Activated CD4-positive, alpha-beta memory T cell treated with anti-CD3 and anti-CD28 coated beads for 36 hours (primary cell): ENCODE measurements at regions of chr11 and their contacts with region 1.

Region 1: DNA sequence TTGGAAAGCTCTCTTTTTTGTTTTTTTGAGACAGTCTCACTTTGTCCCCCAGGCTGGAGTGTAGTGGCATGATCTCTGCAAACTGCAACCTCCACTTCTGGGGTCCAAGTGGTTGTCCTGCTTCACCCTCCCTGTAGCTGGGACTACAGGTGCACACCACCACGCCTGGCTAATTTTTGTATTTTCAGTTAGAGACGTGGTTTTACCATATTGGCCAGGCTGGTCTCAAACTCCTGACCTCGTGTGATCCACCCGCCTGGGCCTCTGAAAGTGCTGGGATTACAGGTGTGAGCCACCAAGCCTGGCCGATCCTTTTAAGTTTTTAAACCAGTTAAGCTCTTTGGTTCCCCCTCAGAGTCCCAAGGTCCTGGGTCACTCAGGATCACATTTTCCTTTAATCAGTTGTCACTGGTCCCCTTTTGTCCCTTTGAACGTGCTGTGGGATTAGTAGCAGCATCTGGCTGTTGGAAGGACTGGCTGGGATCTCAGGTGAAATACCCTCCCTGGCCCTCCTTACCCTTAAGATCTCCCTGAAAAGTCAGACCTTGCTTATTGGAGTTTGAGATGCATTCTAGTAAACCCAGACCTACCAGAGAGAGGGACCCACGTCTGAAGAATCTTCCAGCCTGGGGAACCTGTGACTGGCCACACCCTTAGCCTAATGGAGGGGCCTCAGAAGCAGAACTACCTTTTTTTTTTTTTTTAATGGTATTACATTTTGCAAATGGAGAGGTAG is 8.1 kb downstream of the MALAT1 start:
- DNase-seq: peak; percentile 69
- H3K4me3 Mint-ChIP-seq: no peak overlapping the region
- H3K27ac Mint-ChIP-seq: no peak overlapping the region
- H3K4me1 Mint-ChIP-seq: peaks cover 44% of the 10 kb centered on the region
- H3K27me3 Mint-ChIP-seq: peaks cover 4% of the 10 kb centered on the region

Region 2: GRCh38 chr11:65225279-65226102 is 281.4 kb before region 1 on chr11:
- CTCF ChIA-PET with region 1: no interaction called
- POLR2A ChIA-PET with region 1: no interaction called
- intact Hi-C with region 1: loop called (anchors 1 kb)
- DNase-seq: peak; percentile 76
- H3K4me3 Mint-ChIP-seq: peak overlapping the region; percentile 72
- H3K27ac Mint-ChIP-seq: no peak overlapping the region
- H3K4me1 Mint-ChIP-seq: peaks cover 7% of the 10 kb centered on the region
- H3K27me3 Mint-ChIP-seq: peaks cover 24% of the 10 kb centered on the region

Region 3: GRCh38 chr11:65382033-65382807 is 124.7 kb before region 1 on chr11 and contains the start of gene SLC25A45:
- CTCF ChIA-PET with region 1: interaction called, 8 read pairs
- POLR2A ChIA-PET with region 1: interaction called, 39 read pairs
- intact Hi-C with region 1: loop called (anchors 1 kb)
- DNase-seq: peak; percentile 97
- H3K4me3 Mint-ChIP-seq: peak within 1 kb of the TSS; percentile 85
- H3K27ac Mint-ChIP-seq: peak within 1 kb of the TSS; percentile 97
- H3K4me1 Mint-ChIP-seq: peaks cover 41% of the 10 kb centered on the region
- H3K27me3 Mint-ChIP-seq: no peaks in the 10 kb centered on the region
- total RNA-seq, gene SLC25A45: 14.4 to 16.1 TPM

Region 4: GRCh38 chr11:65432686-65433582 is 74.0 kb before region 1 on chr11:
- CTCF ChIA-PET with region 1: interaction called, 5 read pairs
- POLR2A ChIA-PET with region 1: interaction called, 4,089 read pairs
- intact Hi-C with region 1: no loop called
- DNase-seq: peak; percentile 5
- H3K4me3 Mint-ChIP-seq: peak overlapping the region; percentile 21
- H3K27ac Mint-ChIP-seq: peak overlapping the region; percentile 78
- H3K4me1 Mint-ChIP-seq: peaks cover 88% of the 10 kb centered on the region
- H3K27me3 Mint-ChIP-seq: no peaks in the 10 kb centered on the region

Region 5: GRCh38 chr11:65477149-65477965 is 29.6 kb before region 1 on chr11:
- CTCF ChIA-PET with region 1: interaction called, 8 read pairs
- POLR2A ChIA-PET with region 1: interaction called, 824 read pairs
- intact Hi-C with region 1: loop called (anchors 1 kb)
- DNase-seq: peak; percentile 96
- H3K4me3 Mint-ChIP-seq: peak overlapping the region; percentile 91
- H3K27ac Mint-ChIP-seq: peak overlapping the region; percentile 95
- H3K4me1 Mint-ChIP-seq: peaks cover 19% of the 10 kb centered on the region
- H3K27me3 Mint-ChIP-seq: no peaks in the 10 kb centered on the region

Region 6: GRCh38 chr11:65558002-65558931 is 51.3 kb after region 1 on chr11 and contains the start of gene LTBP3:
- CTCF ChIA-PET with region 1: no interaction called
- POLR2A ChIA-PET with region 1: no interaction called
- intact Hi-C with region 1: no loop called
- DNase-seq: peak; percentile 62
- H3K4me3 Mint-ChIP-seq: peak within 1 kb of the TSS; percentile 84
- H3K27ac Mint-ChIP-seq: peak within 1 kb of the TSS; percentile 84
- H3K4me1 Mint-ChIP-seq: peaks cover 57% of the 10 kb centered on the region
- H3K27me3 Mint-ChIP-seq: no peaks in the 10 kb centered on the region
- total RNA-seq, gene LTBP3: 60.7 to 63.3 TPM

Region 7: GRCh38 chr11:65672186-65672860 is 165.4 kb after region 1 on chr11:
- CTCF ChIA-PET with region 1: no interaction called
- POLR2A ChIA-PET with region 1: no interaction called
- intact Hi-C with region 1: no loop called
- DNase-seq: no peak
- H3K4me3 Mint-ChIP-seq: no peak overlapping the region
- H3K27ac Mint-ChIP-seq: no peak overlapping the region
- H3K4me1 Mint-ChIP-seq: peaks cover 3% of the 10 kb centered on the region
- H3K27me3 Mint-ChIP-seq: no peaks in the 10 kb centered on the region